Gastrocnemius medialis (tissue), 4 donors: ENCODE measurements at regions of chr17 and their contacts with region 1.

Region 1: DNA sequence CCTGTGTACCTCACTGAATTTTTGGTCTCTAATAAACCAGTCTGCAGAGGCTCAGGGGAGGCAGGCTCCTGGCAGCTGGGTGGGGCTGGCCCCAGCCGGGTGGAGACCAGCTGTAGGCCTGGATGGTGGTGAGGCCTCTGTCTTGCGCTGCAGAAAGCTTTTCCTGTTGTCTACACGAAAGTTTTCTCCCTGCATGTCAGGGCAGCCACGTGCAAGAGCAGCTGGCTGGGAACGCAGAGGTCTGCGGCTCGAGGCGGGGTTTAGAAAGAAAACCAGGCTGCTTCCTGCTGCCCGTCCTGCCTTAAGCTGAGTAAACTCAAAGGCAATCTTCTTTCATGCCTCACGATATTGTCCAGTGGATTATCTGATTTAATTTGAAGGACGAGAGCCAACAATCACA is 2.4 kb downstream of the SERPINF1 start:
- DNase-seq: peak; percentile 83
- ATAC-seq: peak; percentile 23 to 42
- H3K4me3 ChIP-seq: peak overlapping the region; percentile 65 to 82 (median 74)
- H3K27ac ChIP-seq: peak overlapping the region; percentile 97 to 100 (median 98)
- H3K4me1 ChIP-seq: peaks cover 40 to 48% of the 10 kb centered on the region in 2 donors
- H3K27me3 ChIP-seq: no peaks in the 10 kb centered on the region
- CTCF ChIP-seq: no peak
- POLR2A ChIP-seq: peak; percentile 53 to 70

Region 2: GRCh38 chr17:1724506-1725362 is 39.5 kb before region 1 on chr17 and contains the start of gene WDR81:
- in situ Hi-C with region 1: no loop called
- intact Hi-C with region 1: loop called (anchors 2 kb)
- DNase-seq: peak; percentile 91 to 93
- ATAC-seq: peak; percentile 71 to 78
- H3K4me3 ChIP-seq: peak within 1 kb of the TSS; percentile 62 to 88 (median 76)
- H3K27ac ChIP-seq: peak within 1 kb of the TSS; percentile 95 to 100 (median 99)
- H3K4me1 ChIP-seq: peaks cover 47 to 50% of the 10 kb centered on the region in 2 donors
- H3K27me3 ChIP-seq: no peaks in the 10 kb centered on the region
- CTCF ChIP-seq: peak in 4 of 5 experiments; percentile 6 to 61 (median 26)
- POLR2A ChIP-seq: peak; percentile 82 to 92
- total RNA-seq, gene WDR81: 22.3 to 61.1 (median 42.7) TPM

Region 3: GRCh38 chr17:1730328-1731193 is 33.7 kb before region 1 on chr17:
- in situ Hi-C with region 1: no loop called
- intact Hi-C with region 1: loop called (anchors 2 kb)
- DNase-seq: peak; percentile 96
- ATAC-seq: peak; percentile 91 to 92
- H3K4me3 ChIP-seq: peak overlapping the region; percentile 29 to 47 (median 38)
- H3K27ac ChIP-seq: peak overlapping the region; percentile 99 to 100 (median 99)
- H3K4me1 ChIP-seq: peaks cover 40 to 48% of the 10 kb centered on the region in 2 donors
- H3K27me3 ChIP-seq: no peaks in the 10 kb centered on the region
- CTCF ChIP-seq: no peak
- POLR2A ChIP-seq: peak; percentile 73 to 85